HepG2 (cell line): ENCODE measurements at regions of chr4 and their contacts with region 1.

Region 1: GRCh38 chr4:153127760-153128494 is 76.3 kb upstream of the TRIM2 start:
- DNase-seq: peak; percentile 67
- ATAC-seq: peak; percentile 85
- H3K4me3 ChIP-seq: peak overlapping the region in 2 of 3 experiments; percentile 0 to 41; a peak in 2 of 6 replicates
- H3K27ac ChIP-seq: no peak overlapping the region
- H3K4me1 ChIP-seq: peaks cover 20% of the 10 kb centered on the region
- H3K27me3 ChIP-seq: no peaks in the 10 kb centered on the region; a peak in 1 of 5 replicates
- CTCF ChIP-seq: peak; percentile 84
- EP300 ChIP-seq: no peak
- POLR2A ChIP-seq: no peak
- RAD21 ChIP-seq: peak; percentile 87

Region 2: GRCh38 chr4:152779513-152780266 is 348.2 kb before region 1 on chr4 and contains the starts of genes ARFIP1 and TIGD4:
- CTCF ChIA-PET with region 1: no interaction called
- POLR2A ChIA-PET with region 1: no interaction called
- in situ Hi-C with region 1: no loop called
- intact Hi-C with region 1: loop called (anchors 5 kb)
- DNase-seq: peak; percentile 95
- ATAC-seq: peak; percentile 95
- H3K4me3 ChIP-seq: peak within 1 kb of the TSS; percentile 64 to 85 (median 65)
- H3K27ac ChIP-seq: peak within 1 kb of the TSS; percentile 75
- H3K4me1 ChIP-seq: peaks cover 36% of the 10 kb centered on the region
- H3K27me3 ChIP-seq: no peaks in the 10 kb centered on the region; a peak in 1 of 5 replicates
- CTCF ChIP-seq: peak; percentile 71
- EP300 ChIP-seq: peak in 1 of 2 experiments; percentile 24; a peak in 2 of 4 replicates
- POLR2A ChIP-seq: peak; percentile 66 to 86; a peak in 3 of 4 replicates
- RAD21 ChIP-seq: peak; percentile 57
- total RNA-seq, gene ARFIP1: 27.7 and 44.8 TPM in 2 replicates
- total RNA-seq, gene TIGD4: 0.49 and 0.62 TPM in 2 replicates

Region 3: GRCh38 chr4:152850377-152850776 is 277.6 kb before region 1 on chr4:
- CTCF ChIA-PET with region 1: interaction called, 5 read pairs
- POLR2A ChIA-PET with region 1: no interaction called
- in situ Hi-C with region 1: loop called (anchors 5 kb)
- intact Hi-C with region 1: loop called (anchors 1 kb)
- DNase-seq: peak; percentile 7
- ATAC-seq: no peak
- H3K4me3 ChIP-seq: no peak overlapping the region
- H3K27ac ChIP-seq: no peak overlapping the region
- H3K4me1 ChIP-seq: no peaks in the 10 kb centered on the region
- H3K27me3 ChIP-seq: no peaks in the 10 kb centered on the region
- CTCF ChIP-seq: no peak
- EP300 ChIP-seq: no peak
- POLR2A ChIP-seq: no peak
- RAD21 ChIP-seq: no peak

Region 4: DNA sequence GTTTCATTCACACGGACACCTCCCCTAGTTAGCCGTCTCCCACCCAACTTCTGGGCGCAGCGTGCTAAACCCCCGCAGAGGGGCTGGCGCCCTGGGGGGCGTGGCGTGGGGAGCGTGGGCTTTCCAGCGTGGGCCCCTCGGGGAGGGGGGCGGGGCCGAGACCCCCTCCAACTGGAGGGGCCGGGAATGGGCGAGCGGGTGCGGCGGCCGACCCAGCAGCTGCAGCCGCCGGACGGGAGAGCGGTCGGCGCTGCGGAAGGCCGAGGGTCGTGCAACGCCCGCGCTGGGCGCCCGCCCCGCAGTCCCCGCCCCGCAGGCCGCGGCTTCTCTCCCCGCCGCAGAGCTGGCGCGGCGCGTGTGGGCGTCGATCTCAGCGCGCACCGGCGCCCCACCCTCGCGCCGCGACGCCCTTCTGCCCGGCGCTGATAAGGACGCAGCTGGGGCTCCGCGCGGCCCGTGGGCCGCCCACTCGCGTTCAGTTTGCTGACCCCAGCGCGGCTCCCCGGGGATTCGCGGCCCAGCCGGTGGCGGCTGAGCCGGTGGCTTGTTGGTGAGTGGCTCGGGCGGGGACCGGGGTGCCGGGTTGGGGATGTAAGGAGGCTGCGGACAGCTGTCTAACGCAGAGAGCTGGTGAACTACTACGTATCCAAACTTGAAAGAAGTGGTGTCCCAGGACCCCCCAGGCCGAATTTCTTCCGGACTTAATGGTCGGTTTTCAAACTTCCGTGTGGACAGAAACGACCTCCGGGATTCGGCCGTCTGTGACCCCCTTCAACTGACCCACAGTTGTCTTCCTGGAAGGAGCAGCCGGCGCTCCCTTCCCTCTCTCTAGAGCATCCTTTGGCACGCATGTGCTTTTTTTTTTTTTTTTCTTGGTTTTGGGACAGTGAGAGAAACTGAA is 190.3 kb before region 1 on chr4:
- CTCF ChIA-PET with region 1: no interaction called
- POLR2A ChIA-PET with region 1: no interaction called
- in situ Hi-C with region 1: no loop called
- intact Hi-C with region 1: loop called (anchors 5 kb)
- DNase-seq: no peak
- ATAC-seq: peak; percentile 30
- H3K4me3 ChIP-seq: peak overlapping the region; percentile 44 to 71 (median 59)
- H3K27ac ChIP-seq: no peak overlapping the region
- H3K4me1 ChIP-seq: peaks cover 18% of the 10 kb centered on the region
- H3K27me3 ChIP-seq: peaks cover 7 to 50% of the 10 kb centered on the region in 2 experiments; a peak in 4 of 5 replicates
- CTCF ChIP-seq: no peak
- EP300 ChIP-seq: no peak
- POLR2A ChIP-seq: no peak
- RAD21 ChIP-seq: no peak

Region 5: DNA sequence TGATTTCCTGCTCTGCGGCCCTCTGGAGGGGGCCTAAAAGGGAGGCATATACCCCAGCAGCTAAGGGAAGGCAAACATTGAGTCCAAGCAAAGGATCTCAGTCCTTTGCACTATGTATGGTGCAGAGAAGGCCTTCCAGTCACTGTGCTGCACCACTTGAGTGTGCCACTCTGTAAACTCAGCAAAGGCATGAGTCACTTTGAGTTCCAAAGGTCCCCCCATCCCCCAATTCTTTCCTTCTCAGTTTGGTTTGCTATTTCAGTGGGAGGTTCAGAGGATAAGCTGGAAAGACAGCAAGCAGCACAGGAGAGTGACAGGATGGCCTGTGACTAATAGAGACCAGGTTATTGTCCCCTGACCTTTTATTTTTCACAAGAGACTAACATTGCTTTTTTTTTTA is 60.5 kb before region 1 on chr4:
- CTCF ChIA-PET with region 1: no interaction called
- POLR2A ChIA-PET with region 1: no interaction called
- in situ Hi-C with region 1: no loop called
- intact Hi-C with region 1: loop called (anchors 10 kb)
- DNase-seq: peak; percentile 85
- ATAC-seq: peak; percentile 91
- H3K4me3 ChIP-seq: peak overlapping the region in 2 of 3 experiments; percentile 55 to 57; a peak in 3 of 6 replicates
- H3K27ac ChIP-seq: peak overlapping the region; percentile 66
- H3K4me1 ChIP-seq: peaks cover 61% of the 10 kb centered on the region
- H3K27me3 ChIP-seq: no peaks in the 10 kb centered on the region
- CTCF ChIP-seq: no peak
- EP300 ChIP-seq: peak in 1 of 2 experiments; percentile 74; a peak in 1 of 4 replicates
- POLR2A ChIP-seq: 0 out of 4 replicates have a peak, but pooled peaks of 1 of the 2 experiments have one; percentile 24
- RAD21 ChIP-seq: 0 out of 2 replicates have a peak, but pooled peaks have one; percentile 23

Region 6: GRCh38 chr4:153083447-153083947 is 44.4 kb before region 1 on chr4:
- CTCF ChIA-PET with region 1: interaction called, 51 read pairs
- POLR2A ChIA-PET with region 1: interaction called, 5 read pairs
- in situ Hi-C with region 1: loop called (anchors 5 kb)
- intact Hi-C with region 1: loop called (anchors 1 kb)
- DNase-seq: peak; percentile 72
- ATAC-seq: peak; percentile 95
- H3K4me3 ChIP-seq: peak overlapping the region in 1 of 3 experiments; percentile 17; a peak in 2 of 6 replicates
- H3K27ac ChIP-seq: no peak overlapping the region
- H3K4me1 ChIP-seq: peaks cover 9% of the 10 kb centered on the region
- H3K27me3 ChIP-seq: peaks cover 0 to 1% of the 10 kb centered on the region in 2 experiments; a peak in 1 of 5 replicates
- CTCF ChIP-seq: peak; percentile 80
- EP300 ChIP-seq: no peak
- POLR2A ChIP-seq: no peak
- RAD21 ChIP-seq: peak; percentile 59